ENCODE measurements at regions of chr12 and their contacts with region 1.

Region 1: GRCh38 chr12:69470189-69471075 is at the start of gene FRS2:
- DNase-seq: peak; percentile 88
- H3K4me3 ChIP-seq: peak within 1 kb of the TSS; percentile 53 to 89 (median 79)
- H3K27ac ChIP-seq: peak within 1 kb of the TSS; percentile 59
- H3K4me1 ChIP-seq: peaks cover 12% of the 10 kb centered on the region
- H3K27me3 ChIP-seq: no peaks in the 10 kb centered on the region
- CTCF ChIP-seq: peak in 1 of 2 donors; percentile 32
- POLR2A ChIP-seq: peak; percentile 96
- total RNA-seq, gene FRS2: 15.5 and 17.1 TPM in 2 replicates

Region 2: DNA sequence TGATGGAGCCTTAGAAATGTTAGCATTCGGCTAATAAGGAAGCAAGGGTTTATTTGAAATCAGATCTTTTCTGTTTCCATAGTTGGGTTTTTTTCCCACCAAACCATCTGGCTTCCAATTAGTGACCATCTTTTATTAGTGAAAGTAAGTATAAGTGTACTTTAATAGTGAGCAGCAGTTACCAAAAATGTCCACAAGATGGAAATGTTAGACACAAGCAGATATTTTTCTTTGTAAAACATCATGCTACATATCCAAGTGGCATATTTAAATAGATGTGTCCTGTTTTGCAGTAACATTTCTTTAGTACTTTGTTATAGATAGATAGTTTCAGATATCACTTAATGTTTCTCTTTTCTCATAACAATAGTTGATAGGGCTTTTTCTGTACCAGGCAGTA is 82.1 kb before region 1 on chr12:
- CTCF ChIA-PET with region 1: interaction called, 6 read pairs
- POLR2A ChIA-PET with region 1: no interaction called
- dilution Hi-C with region 1: no loop called
- intact Hi-C with region 1: loop called (anchors 2 kb)
- DNase-seq: peak; percentile 79
- H3K4me3 ChIP-seq: no peak overlapping the region
- H3K27ac ChIP-seq: no peak overlapping the region
- H3K4me1 ChIP-seq: peaks cover 6% of the 10 kb centered on the region
- H3K27me3 ChIP-seq: no peaks in the 10 kb centered on the region
- CTCF ChIP-seq: peak; percentile 37 to 41
- POLR2A ChIP-seq: no peak

Region 3: DNA sequence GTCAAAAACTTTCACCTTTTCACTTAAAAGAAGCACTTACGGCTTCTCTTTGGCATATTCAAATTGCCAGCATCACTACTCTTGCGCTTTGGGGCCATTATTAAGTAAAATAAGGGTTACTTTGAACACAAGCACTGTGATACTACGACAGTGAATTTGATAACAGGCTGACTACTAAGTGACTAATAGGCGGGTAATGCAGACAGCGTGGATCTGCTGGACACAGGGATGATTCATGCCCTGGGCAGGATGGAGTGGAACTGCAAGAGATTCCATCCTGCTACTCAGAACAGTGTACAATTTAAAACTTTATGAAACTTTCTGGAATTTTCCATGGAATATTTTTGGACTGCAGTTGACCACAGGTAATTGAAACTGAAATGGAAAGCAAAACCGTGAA is 65.0 kb before region 1 on chr12:
- CTCF ChIA-PET with region 1: no interaction called
- POLR2A ChIA-PET with region 1: no interaction called
- dilution Hi-C with region 1: no loop called
- intact Hi-C with region 1: loop called (anchors 2 kb)
- DNase-seq: peak; percentile 92
- H3K4me3 ChIP-seq: no peak overlapping the region
- H3K27ac ChIP-seq: peak overlapping the region; percentile 97
- H3K4me1 ChIP-seq: peaks cover 19% of the 10 kb centered on the region
- H3K27me3 ChIP-seq: no peaks in the 10 kb centered on the region
- CTCF ChIP-seq: no peak
- POLR2A ChIP-seq: no peak